ENCODE measurements at regions of chr13 and their contacts with region 1.

Region 1: GRCh38 chr13:40777166-40777808 is 6.3 kb upstream of the MRPS31 start:
- DNase-seq: no peak
- H3K4me3 ChIP-seq: no peak overlapping the region
- H3K27me3 ChIP-seq: no peaks in the 10 kb centered on the region
- CTCF ChIP-seq: peak; percentile 61

Region 2: GRCh38 chr13:40789275-40790133 is 12.2 kb after region 1 on chr13 and contains the start of gene SLC25A15:
- CTCF ChIA-PET with region 1: interaction called, 61 read pairs
- POLR2A ChIA-PET with region 1: no interaction called
- DNase-seq: no peak
- H3K4me3 ChIP-seq: peak within 1 kb of the TSS; percentile 58
- H3K27me3 ChIP-seq: no peaks in the 10 kb centered on the region
- CTCF ChIP-seq: no peak
- polyA plus RNA-seq, gene SLC25A15: 4.7 and 5.9 TPM in 2 replicates

Measured in BJ (cell line).